Cardiac septum (tissue), 1 donor: ENCODE measurements at regions of chr9 and their contacts with region 1.

Region 1: DNA sequence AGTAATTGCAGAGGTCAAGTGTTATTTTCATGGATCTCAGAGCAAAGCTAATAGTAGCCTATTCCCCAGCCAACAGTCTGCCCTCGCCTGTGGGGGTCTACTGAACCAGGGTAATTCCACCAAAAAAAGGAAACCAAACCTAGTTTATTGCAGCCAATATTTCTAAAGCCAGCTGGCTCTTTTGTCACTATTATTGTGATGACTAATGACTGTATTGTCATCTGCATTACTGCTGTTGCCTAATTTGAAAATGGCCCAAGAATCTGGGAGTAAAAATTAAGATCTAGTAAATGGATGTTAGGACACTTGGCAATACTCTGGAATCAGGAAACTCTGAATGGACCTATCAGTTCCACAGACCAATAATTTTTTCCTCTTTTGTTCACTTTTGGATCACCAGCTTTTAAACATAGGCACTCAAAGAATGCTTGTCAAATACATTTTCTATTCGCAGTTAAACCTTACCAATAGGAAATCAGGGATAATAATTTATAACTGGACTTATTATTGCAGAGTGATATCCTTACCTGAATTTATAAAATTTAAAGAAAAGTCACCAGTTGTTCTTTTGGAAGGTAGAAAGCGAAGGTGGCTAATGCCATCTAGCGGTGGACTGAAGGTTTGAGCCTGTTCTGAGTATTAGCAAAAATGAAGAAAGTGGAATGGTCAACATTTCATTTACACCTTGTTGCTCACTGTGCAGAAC is 69.2 kb downstream of the SYK start:
- DNase-seq: no peak

Region 2: DNA sequence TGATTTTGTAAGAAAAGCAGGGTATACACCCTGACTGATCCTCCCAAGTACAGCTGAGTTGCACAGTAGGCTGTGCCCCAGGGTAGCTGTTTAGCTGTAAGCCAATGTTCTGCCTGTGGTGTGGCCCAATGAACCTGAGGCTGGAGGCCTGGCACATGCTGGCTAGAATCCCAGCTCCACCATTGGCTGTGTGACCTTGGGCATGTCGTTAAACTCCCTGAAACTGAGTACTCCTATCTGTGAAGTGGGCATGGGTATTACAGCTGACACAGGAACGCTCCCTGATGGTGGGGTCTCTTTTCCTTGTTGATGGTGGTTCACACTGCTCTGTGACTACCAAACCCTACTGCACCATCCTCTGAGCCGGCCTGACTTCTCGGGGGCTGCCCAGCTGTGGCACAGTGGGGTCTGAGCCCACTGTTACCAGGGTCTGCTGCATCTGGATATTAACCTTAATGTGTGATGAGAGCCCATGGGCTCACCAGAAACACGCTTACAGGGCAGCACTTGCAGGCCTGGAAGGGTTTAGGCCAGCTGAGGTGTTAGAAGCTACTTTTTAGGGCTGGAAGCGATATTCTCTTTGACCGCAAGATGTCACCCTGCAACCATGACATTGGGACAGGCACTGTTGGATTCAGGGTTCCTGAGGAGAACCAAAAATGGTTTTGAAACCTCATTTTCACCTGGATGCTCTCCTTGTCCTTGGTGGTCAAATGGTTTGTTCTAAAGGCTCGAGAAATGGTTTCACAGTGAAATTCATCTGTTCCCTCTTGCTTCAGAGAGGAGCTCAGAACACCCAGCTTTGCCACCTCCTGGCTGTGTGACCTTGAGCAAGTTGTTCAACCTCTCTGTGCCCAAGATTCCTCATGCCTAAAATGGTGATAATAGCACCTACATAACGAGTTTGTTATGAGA is 1272.8 kb before region 1 on chr9:
- intact Hi-C with region 1: loop called (anchors 5 kb)
- DNase-seq: peak; percentile 58

Region 3: GRCh38 chr9:90142580-90142979 is 728.2 kb before region 1 on chr9:
- intact Hi-C with region 1: loop called (anchors 5 kb)
- DNase-seq: no peak

Region 4: DNA sequence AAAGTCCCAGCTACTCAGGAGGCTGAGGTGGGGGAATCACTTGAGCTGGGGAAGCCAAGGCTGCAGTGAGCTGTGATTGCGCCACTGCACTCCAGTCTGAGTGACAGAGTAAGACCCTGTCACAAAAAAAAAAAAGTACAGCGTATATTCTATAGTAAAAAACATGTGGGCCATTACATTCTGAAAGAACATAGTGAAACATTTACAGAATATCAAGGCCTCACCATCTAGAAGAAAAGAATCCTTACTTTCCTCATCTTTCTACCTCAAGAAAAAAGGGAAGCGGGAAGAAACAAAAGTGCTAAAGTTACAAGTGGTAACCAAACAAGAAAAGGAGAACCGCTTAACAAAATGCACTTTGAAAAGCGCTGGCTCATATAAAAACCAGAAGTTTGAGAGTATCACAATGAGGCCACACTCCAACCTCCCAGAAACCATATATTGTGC is 74.9 kb before region 1 on chr9:
- intact Hi-C with region 1: no loop called
- DNase-seq: no peak

Region 5: DNA sequence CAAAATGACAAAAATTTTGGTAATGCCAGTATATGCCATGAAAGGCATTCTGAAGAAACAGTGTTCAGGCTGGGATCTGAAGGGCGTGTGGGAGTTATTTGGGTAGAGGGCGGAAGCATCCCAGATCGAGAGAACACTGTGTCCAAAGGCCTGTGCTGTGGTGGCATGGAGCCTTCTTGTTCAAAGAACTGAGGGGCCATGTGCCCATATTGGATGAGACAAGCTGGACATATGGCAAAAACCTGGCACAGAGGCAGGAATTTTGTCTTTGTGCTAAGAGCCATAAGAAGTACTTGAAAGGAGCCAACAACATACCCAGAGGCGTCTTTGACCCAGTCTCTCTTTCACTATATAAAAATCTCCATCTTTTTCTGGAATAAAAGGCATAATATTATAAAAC is 58.9 kb after region 1 on chr9:
- intact Hi-C with region 1: no loop called
- DNase-seq: no peak